GM12878 (cell line): ENCODE measurements at regions of chr10 and their contacts with region 1.

Region 1: GRCh38 chr10:26468700-26469099 is 30.6 kb downstream of the APBB1IP start:
- DNase-seq: no peak
- ATAC-seq: peak; percentile 72
- H3K4me3 ChIP-seq: peak overlapping the region; percentile 61
- H3K27ac ChIP-seq: peak overlapping the region; percentile 67
- H3K4me1 ChIP-seq: peaks cover 75% of the 10 kb centered on the region
- H3K27me3 ChIP-seq: no peaks in the 10 kb centered on the region
- CTCF ChIP-seq: no peak
- EP300 ChIP-seq: no peak
- POLR2A ChIP-seq: 0 out of 2 replicates have a peak, but pooled peaks have one; percentile 24
- RAD21 ChIP-seq: no peak

Region 2: GRCh38 chr10:25999295-25999981 is 469.3 kb before region 1 on chr10:
- CTCF ChIA-PET with region 1: no interaction called
- POLR2A ChIA-PET with region 1: no interaction called
- RAD21 ChIA-PET with region 1: no interaction called
- SMC1A ChIA-PET with region 1: no interaction called
- in situ Hi-C with region 1: no loop called
- intact Hi-C with region 1: no loop called
- DNase-seq: no peak
- ATAC-seq: no peak
- H3K4me3 ChIP-seq: no peak overlapping the region
- H3K27ac ChIP-seq: no peak overlapping the region
- H3K4me1 ChIP-seq: no peaks in the 10 kb centered on the region
- H3K27me3 ChIP-seq: no peaks in the 10 kb centered on the region
- CTCF ChIP-seq: no peak
- EP300 ChIP-seq: no peak
- POLR2A ChIP-seq: no peak
- RAD21 ChIP-seq: no peak

Region 3: DNA sequence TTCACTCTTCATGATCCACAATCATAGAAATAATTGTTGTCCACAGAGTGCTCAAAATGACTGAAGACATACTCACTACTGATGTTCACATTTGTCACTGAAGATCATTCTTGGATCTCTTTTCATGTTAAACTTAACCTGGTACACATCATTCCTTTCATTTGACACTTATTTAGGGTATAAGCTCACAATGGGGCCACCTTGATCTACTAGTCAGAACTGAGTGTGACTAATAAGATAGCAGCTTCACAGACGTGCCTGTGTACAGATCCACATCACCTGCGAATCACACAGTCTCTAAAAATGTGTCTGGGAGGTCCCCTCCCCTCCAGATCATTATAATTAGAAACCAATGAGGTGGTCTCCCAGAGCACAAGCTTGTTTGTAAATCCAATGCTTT is 230.3 kb before region 1 on chr10:
- CTCF ChIA-PET with region 1: no interaction called
- POLR2A ChIA-PET with region 1: no interaction called
- RAD21 ChIA-PET with region 1: no interaction called
- SMC1A ChIA-PET with region 1: no interaction called
- in situ Hi-C with region 1: no loop called
- intact Hi-C with region 1: no loop called
- DNase-seq: no peak
- ATAC-seq: no peak
- H3K4me3 ChIP-seq: no peak overlapping the region
- H3K27ac ChIP-seq: no peak overlapping the region
- H3K4me1 ChIP-seq: no peaks in the 10 kb centered on the region
- H3K27me3 ChIP-seq: peaks cover 2 to 4% of the 10 kb centered on the region in 2 experiments; a peak in 2 of 4 replicates
- CTCF ChIP-seq: no peak
- EP300 ChIP-seq: no peak
- POLR2A ChIP-seq: no peak
- RAD21 ChIP-seq: no peak

Region 4: GRCh38 chr10:26457088-26457487 is 11.6 kb before region 1 on chr10:
- CTCF ChIA-PET with region 1: interaction called, 3 read pairs
- POLR2A ChIA-PET with region 1: interaction called, 24 read pairs
- RAD21 ChIA-PET with region 1: interaction called, 19 read pairs
- SMC1A ChIA-PET with region 1: interaction called, 30 read pairs
- in situ Hi-C with region 1: no loop called
- intact Hi-C with region 1: no loop called
- DNase-seq: peak; percentile 85
- ATAC-seq: peak; percentile 92
- H3K4me3 ChIP-seq: peak overlapping the region; percentile 16; the same call in 1 of the 2 replicates
- H3K27ac ChIP-seq: peak overlapping the region; percentile 83
- H3K4me1 ChIP-seq: peaks cover 43% of the 10 kb centered on the region
- H3K27me3 ChIP-seq: no peaks in the 10 kb centered on the region
- CTCF ChIP-seq: no peak
- EP300 ChIP-seq: peak; percentile 36 to 40; a peak in 2 of 4 replicates
- POLR2A ChIP-seq: no peak; the same call in 1 of the 2 replicates
- RAD21 ChIP-seq: no peak

Region 5: DNA sequence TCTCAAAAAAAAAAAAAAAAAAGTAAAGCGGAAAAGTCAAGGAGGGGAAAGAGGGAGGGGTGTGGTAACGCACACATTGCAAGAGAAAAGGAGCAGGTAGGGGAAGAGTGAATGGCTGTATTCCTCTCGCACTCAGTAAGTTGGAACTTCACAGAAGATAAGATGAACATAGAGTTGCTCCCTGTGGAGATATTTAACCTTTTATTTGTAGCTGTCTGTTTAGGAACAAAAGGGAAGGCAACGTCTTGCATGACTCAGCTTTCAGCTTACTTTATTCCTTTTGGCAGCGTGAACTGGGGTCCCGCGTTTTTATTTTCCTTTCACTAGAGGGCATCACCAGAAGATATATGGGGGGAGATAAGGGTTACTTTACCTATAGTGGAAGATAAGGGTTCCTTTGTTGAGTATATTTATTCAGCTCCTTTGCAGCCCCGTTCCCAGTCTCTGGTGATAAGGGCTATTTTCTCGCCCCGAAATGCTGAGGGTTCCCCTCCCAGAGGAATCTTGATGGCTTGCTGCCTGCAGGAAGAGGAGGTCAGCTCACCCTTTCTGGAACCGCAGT is 47.9 kb after region 1 on chr10:
- CTCF ChIA-PET with region 1: no interaction called
- POLR2A ChIA-PET with region 1: no interaction called
- RAD21 ChIA-PET with region 1: no interaction called
- SMC1A ChIA-PET with region 1: no interaction called
- in situ Hi-C with region 1: no loop called
- intact Hi-C with region 1: no loop called
- DNase-seq: no peak
- ATAC-seq: no peak
- H3K4me3 ChIP-seq: no peak overlapping the region
- H3K27ac ChIP-seq: no peak overlapping the region
- H3K4me1 ChIP-seq: no peaks in the 10 kb centered on the region
- H3K27me3 ChIP-seq: no peaks in the 10 kb centered on the region
- CTCF ChIP-seq: no peak
- EP300 ChIP-seq: no peak
- POLR2A ChIP-seq: no peak
- RAD21 ChIP-seq: no peak

Region 6: GRCh38 chr10:26593896-26594295 is 125.2 kb after region 1 on chr10:
- CTCF ChIA-PET with region 1: no interaction called
- POLR2A ChIA-PET with region 1: no interaction called
- RAD21 ChIA-PET with region 1: no interaction called
- SMC1A ChIA-PET with region 1: no interaction called
- in situ Hi-C with region 1: no loop called
- intact Hi-C with region 1: no loop called
- DNase-seq: no peak
- ATAC-seq: peak; percentile 99
- H3K4me3 ChIP-seq: no peak overlapping the region
- H3K27ac ChIP-seq: no peak overlapping the region
- H3K4me1 ChIP-seq: no peaks in the 10 kb centered on the region
- H3K27me3 ChIP-seq: no peaks in the 10 kb centered on the region
- CTCF ChIP-seq: no peak
- EP300 ChIP-seq: no peak
- POLR2A ChIP-seq: no peak
- RAD21 ChIP-seq: no peak